ENCODE measurements at regions of chr2 and their contacts with region 1.

Region 1: DNA sequence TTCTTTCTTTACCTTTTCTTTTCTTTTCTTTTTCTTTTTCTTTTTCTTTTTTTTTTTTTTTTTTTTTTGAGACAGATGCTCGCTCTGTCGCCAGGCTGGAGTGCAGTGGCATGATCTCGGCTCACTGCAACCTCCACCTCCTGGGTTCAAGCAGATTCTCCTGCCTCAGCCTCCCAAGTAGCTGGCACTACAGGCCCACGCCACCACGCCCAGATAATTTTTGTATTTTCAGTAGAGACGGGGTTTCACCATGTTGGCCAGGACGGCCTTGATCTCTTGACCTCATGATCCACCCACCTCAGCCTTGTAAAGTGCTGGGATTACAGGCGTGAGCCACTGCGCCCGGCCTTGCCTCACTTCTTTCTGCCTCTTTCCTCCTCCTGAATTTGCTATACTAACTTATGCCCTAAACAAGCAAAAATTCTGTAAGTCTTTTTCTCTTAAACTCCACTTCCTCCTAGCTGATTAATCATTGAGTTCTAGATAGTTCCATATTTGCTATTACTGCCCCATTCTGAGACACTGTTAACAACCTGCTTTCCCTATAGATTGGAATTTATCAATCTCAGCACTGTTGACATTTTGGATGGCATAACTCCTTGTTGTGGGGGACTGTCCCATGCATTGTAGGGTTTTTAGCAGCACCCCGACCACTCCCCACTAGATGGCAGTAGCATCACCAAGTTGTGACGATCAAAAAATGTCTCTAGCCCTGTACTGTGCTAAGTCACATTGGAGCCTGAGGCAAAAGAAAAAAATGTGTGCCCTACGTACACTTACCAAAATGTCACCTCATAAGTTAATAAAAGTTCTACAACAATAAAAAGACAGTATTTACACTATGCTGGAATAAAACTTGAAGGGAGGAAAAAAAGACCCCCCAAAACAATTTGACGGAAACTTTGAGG is 16.4 kb upstream of the THADA start:
- DNase-seq: peak; percentile 82
- H3K4me3 ChIP-seq: no peak overlapping the region; a peak in 1 of 4 replicates
- H3K27ac ChIP-seq: no peak overlapping the region
- H3K4me1 ChIP-seq: no peaks in the 10 kb centered on the region
- H3K27me3 ChIP-seq: no peaks in the 10 kb centered on the region
- CTCF ChIP-seq: peak; percentile 97
- EP300 ChIP-seq: no peak
- RAD21 ChIP-seq: peak; percentile 90

Region 2: GRCh38 chr2:43595603-43596412 is 16.4 kb before region 1 on chr2 and contains the start of gene THADA:
- CTCF ChIA-PET with region 1: interaction called, 46 read pairs
- POLR2A ChIA-PET with region 1: interaction called, 3 read pairs
- DNase-seq: peak; percentile 97
- H3K4me3 ChIP-seq: peak within 1 kb of the TSS; percentile 77 to 88
- H3K27ac ChIP-seq: peak within 1 kb of the TSS; percentile 89 to 98
- H3K4me1 ChIP-seq: peaks cover 7 to 11% of the 10 kb centered on the region in 2 experiments; a peak in 3 of 4 replicates
- H3K27me3 ChIP-seq: no peaks in the 10 kb centered on the region
- CTCF ChIP-seq: no peak
- EP300 ChIP-seq: no peak; a peak in 1 of 4 replicates
- RAD21 ChIP-seq: no peak
- polyA plus RNA-seq, gene THADA: 17.1 and 25.6 TPM in 2 replicates

Region 3: DNA sequence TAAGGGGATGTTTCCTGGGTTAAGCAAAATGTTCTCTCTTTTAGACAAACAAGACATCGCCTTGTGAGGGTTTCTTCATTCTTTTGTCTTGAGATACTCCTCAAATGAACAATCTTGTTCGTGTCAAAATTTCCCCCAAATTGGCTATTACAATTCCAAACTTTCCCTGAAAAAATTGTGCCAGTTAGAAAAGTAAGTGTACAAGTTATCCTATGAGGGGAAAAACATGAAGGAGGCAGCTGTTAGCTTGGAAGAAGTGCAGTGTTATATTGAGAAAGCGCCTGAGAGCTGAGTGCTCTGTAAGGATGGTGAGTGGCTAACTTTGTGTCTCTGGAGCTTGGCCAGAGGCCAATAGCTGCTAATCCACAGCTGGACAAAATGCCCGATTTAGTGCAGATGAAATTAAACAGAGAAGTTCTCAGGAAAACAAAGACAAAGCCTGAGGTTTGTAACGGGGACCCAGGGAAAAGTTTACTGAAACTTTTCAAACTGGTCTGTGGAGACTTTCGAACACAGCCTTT is 10.8 kb after region 1 on chr2:
- CTCF ChIA-PET with region 1: interaction called, 16 read pairs
- POLR2A ChIA-PET with region 1: interaction called, 5 read pairs
- DNase-seq: peak; percentile 52
- H3K4me3 ChIP-seq: no peak overlapping the region
- H3K27ac ChIP-seq: peak overlapping the region in 1 of 2 experiments; percentile 17; a peak in 2 of 4 replicates
- H3K4me1 ChIP-seq: peaks cover 0 to 3% of the 10 kb centered on the region in 2 experiments; a peak in 2 of 4 replicates
- H3K27me3 ChIP-seq: no peaks in the 10 kb centered on the region
- CTCF ChIP-seq: no peak
- EP300 ChIP-seq: no peak
- RAD21 ChIP-seq: no peak

Region 4: DNA sequence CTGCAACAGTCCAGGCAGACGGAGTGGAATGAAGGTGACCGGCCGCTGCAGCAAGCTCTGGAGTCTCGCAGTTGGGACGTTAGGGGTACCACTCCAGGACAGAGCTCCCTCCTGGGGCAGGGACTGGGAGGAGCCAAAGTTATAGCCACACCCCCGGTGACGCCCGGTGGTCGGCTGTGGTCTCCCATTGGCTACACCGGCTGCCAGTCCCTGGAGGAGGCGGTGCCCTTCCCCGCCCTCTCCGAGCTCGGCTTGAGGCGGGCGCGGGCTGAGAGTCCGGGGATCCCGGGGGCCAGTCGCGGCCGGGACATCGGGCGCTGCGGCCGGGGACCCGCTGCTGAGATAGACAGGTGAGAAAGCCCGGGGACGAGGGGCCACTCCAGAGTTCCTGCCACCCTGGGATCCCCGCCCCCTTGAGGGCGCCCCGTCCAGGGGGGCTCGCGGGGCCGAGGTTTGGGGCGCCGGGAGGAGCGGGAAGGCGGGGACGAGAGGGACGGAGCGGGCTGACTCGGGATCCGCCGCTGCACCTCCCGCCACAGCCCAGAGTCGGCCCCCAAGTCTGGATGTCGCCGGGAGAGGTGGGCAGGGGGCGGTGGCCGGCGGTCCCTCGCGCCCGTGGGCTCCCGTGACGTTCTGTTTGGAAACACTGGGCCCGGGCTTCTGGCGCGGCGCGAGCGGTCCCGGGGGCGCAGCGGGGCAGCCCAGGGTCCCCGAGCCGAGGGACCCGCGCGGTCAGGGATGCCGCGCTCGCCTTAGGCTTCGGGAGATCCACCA is 25.0 kb after region 1 on chr2 and contains the start of gene PLEKHH2:
- CTCF ChIA-PET with region 1: interaction called, 33 read pairs
- POLR2A ChIA-PET with region 1: no interaction called
- DNase-seq: peak; percentile 100
- H3K4me3 ChIP-seq: peak within 1 kb of the TSS; percentile 76 to 79
- H3K27ac ChIP-seq: no peak within 1 kb of the TSS
- H3K4me1 ChIP-seq: peaks cover 0 to 9% of the 10 kb centered on the region in 2 experiments; a peak in 1 of 4 replicates
- H3K27me3 ChIP-seq: no peaks in the 10 kb centered on the region
- CTCF ChIP-seq: no peak
- EP300 ChIP-seq: no peak
- RAD21 ChIP-seq: no peak
- polyA plus RNA-seq, gene PLEKHH2: 1.9 and 3.1 TPM in 2 replicates